ENCODE measurements at regions of chr10 and their contacts with region 1.

Region 1: GRCh38 chr10:52004342-52004949 is 305.1 kb upstream of the CSTF2T start:
- DNase-seq: peak; percentile 62
- H3K4me3 ChIP-seq: no peak overlapping the region
- H3K27ac ChIP-seq: no peak overlapping the region
- H3K4me1 ChIP-seq: no peaks in the 10 kb centered on the region
- H3K27me3 ChIP-seq: peaks cover 3 to 14% of the 10 kb centered on the region in 2 experiments
- CTCF ChIP-seq: peak; percentile 28 to 45
- POLR2A ChIP-seq: no peak

Region 2: DNA sequence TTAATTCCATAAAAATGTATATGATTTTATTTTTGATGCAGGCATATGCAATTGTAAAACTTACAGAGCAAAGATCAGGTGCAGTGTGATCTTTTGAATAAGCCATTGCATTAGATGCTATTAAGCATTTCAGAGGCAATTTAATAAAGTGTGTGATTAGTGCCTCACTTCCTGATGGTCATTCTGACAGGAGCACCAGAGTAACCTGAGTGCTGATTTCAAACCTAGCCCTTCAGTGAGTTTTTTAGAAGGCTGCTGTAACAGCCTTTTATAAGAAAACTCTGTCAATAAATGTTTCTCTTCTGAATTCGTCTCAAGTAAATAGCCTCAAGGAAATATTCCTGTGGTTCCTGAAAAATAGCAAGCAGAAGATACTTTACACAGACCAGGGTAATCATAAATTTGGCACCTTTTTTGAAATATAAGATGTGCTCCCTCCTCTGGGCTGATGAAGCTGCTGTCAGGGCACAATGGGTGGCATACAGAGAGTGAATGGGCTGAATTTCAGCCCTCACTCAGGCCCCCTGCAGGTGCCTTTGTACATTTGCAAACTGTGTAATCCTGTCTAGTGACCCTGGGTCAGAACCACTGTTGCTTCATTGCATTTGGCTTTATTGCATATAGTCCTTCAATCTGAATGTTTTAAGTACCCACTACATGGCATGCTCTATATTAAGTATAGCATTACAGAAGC is 111.3 kb before region 1 on chr10:
- CTCF ChIA-PET with region 1: no interaction called
- POLR2A ChIA-PET with region 1: no interaction called
- dilution Hi-C with region 1: no loop called
- intact Hi-C with region 1: no loop called
- DNase-seq: peak; percentile 18
- H3K4me3 ChIP-seq: no peak overlapping the region
- H3K27ac ChIP-seq: no peak overlapping the region
- H3K4me1 ChIP-seq: no peaks in the 10 kb centered on the region
- H3K27me3 ChIP-seq: no peaks in the 10 kb centered on the region
- CTCF ChIP-seq: peak; percentile 9 to 49
- POLR2A ChIP-seq: no peak

Region 3: GRCh38 chr10:51937308-51938135 is 66.9 kb before region 1 on chr10:
- CTCF ChIA-PET with region 1: no interaction called
- POLR2A ChIA-PET with region 1: no interaction called
- dilution Hi-C with region 1: no loop called
- intact Hi-C with region 1: no loop called
- DNase-seq: no peak
- H3K4me3 ChIP-seq: no peak overlapping the region
- H3K27ac ChIP-seq: no peak overlapping the region
- H3K4me1 ChIP-seq: no peaks in the 10 kb centered on the region
- H3K27me3 ChIP-seq: no peaks in the 10 kb centered on the region
- CTCF ChIP-seq: no peak
- POLR2A ChIP-seq: no peak

Region 4: GRCh38 chr10:51993475-51993874 is 11.0 kb before region 1 on chr10:
- CTCF ChIA-PET with region 1: interaction called, 30 read pairs
- POLR2A ChIA-PET with region 1: no interaction called
- dilution Hi-C with region 1: no loop called
- intact Hi-C with region 1: no loop called
- DNase-seq: no peak
- H3K4me3 ChIP-seq: no peak overlapping the region
- H3K27ac ChIP-seq: no peak overlapping the region
- H3K4me1 ChIP-seq: no peaks in the 10 kb centered on the region
- H3K27me3 ChIP-seq: peaks cover 0 to 3% of the 10 kb centered on the region in 2 experiments
- CTCF ChIP-seq: no peak
- POLR2A ChIP-seq: no peak